ENCODE measurements at regions of chr9 and their contacts with region 1.

Region 1: GRCh38 chr9:89542401-89543021 is 44.6 kb upstream of the SEMA4D start:
- DNase-seq: peak; percentile 48 to 95 (median 68)

Region 2: GRCh38 chr9:89448381-89448780 is 94.1 kb before region 1 on chr9:
- intact Hi-C with region 1: loop called (anchors 2 kb)
- DNase-seq: peak; percentile 72 to 98 (median 77)

Region 3: DNA sequence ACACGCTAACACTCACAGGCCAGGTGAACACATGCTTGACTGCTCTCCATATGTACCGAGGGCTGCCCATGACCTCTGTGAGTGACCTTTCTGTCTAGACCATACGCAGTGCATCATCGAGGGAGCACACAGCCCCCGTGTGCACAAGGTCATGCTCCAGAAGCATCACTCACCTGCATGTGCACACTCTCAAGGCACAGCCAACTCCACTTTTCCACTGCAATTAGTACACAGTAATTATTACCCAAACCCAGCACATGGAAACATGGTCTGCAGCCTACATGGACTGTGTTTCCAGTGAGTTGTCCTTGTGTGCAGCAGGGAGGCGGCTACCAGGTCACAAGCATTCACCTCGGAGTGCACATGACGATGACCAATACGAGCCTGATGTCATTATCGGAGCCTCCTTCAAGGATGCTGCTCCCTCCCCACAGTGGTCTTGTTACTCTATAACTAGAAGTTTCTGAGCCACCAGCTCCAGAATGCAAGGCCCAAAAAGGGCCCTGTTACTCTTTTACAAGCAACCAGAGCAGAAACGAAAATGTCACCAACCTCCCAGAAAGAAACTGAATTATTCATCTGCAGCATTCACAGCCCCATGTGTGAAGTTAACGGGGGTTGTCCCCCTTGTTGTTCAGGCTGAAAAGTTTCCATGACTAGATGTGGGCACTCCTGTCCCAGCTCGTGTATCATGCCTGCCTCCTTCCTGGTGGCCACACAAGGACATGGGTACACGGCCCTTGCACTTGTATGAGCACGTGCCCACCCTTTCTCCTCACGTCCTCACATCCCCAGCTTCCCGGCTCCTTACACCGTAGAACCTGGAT is 75.8 kb before region 1 on chr9:
- intact Hi-C with region 1: no loop called
- DNase-seq: peak in 1 of 10 donors; percentile 8

Region 4: GRCh38 chr9:89961616-89962341 is 419.3 kb after region 1 on chr9:
- intact Hi-C with region 1: no loop called
- DNase-seq: no peak

Region 5: DNA sequence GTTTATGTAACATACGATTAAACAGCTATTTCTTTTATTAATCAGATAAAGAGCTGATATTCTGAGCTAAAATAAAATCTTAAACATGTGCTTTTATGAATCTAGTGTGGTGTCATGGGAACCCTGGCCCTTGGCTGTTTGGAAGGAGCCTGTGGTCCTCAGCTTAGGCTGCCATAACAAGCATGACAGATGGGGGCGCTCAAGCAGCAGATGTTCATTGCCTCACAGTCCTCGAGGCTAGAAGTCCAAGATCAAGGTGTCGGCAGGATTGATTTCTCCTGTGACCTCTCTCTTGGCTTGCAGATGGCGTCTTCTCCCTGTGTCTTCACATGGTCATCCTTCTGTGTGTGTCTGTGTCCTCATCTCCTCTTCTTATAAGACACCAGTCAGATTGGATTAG is 510.5 kb after region 1 on chr9:
- intact Hi-C with region 1: no loop called
- DNase-seq: no peak

Measured in posterior cingulate gyrus (tissue), 11 donors.